Stomach (tissue), 19 donors: ENCODE measurements at regions of chr5 and their contacts with region 1.

Region 1: DNA sequence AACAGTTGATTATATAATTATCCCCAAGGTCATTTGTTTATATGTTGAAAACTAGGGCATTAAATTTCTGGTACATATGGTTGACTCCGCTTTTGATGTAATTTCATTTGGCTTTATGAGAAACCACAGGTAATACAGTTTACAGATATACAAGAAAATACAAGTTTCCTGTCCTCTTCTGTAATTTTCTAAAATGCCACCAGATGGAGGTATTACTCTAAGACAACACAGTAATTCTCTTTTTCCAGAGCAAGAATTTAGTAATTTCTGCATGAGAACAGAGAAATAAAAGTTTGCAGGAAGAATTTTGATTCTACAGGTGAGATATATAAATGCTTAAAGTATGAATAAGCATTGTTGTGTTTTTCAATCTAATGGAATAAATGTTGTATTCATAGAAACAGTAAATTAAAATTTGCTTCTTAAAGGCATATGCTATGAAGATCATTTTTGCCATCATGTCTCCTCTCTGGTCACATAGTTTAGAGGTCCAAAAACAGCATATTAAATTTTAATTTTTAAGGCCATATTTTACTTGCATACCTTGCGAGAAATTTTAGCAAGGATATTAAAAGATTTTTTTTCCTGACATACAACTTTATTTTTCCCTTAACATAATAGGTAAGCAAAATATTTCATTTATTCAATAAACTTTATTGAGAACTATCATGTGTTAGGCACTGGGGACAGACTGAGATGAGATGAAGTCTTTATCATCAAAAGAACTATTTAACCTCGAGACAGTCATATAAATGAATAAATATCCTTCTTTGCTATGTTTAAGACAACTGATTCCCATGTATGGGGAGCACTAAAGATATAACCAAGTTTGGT is 22.7 kb downstream of the CHD1 start:
- DNase-seq: peak in 1 of 2 donors; percentile 71
- H3K4me3 ChIP-seq: no peak overlapping the region
- H3K27ac ChIP-seq: no peak overlapping the region
- H3K4me1 ChIP-seq: peaks cover 0 to 41% (median 16%) of the 10 kb centered on the region in 4 donors
- H3K27me3 ChIP-seq: no peaks in the 10 kb centered on the region
- CTCF ChIP-seq: peak in 5 of 7 experiments; percentile 58 to 75 (median 69)
- EP300 ChIP-seq: no peak
- POLR2A ChIP-seq: no peak

Region 2: DNA sequence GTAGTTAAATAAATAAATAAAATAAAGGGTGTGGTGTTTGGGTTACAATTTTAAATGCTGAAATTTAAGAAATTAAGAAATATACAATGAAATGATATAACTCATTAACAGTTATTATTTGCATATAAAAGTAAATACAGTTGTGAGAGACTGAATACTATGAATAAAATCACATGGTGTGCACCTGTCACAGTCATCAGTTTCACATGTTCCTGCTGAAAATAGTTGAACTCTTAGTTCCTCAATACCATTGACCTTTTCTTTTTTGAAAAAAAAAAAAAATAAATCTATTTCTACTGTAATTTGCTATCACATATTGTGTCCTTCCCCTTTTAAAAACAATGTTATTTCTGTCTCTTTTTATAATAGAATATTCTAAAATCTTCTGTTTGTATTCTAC is 153.6 kb after region 1 on chr5:
- intact Hi-C with region 1: loop called (anchors 5 kb)
- DNase-seq: no peak
- H3K4me3 ChIP-seq: no peak overlapping the region
- H3K27ac ChIP-seq: no peak overlapping the region
- H3K4me1 ChIP-seq: peaks cover 0 to 10% (median 5%) of the 10 kb centered on the region in 4 donors
- H3K27me3 ChIP-seq: no peaks in the 10 kb centered on the region
- CTCF ChIP-seq: no peak
- EP300 ChIP-seq: no peak
- POLR2A ChIP-seq: no peak